Activated CD4-positive, alpha-beta T cell treated with anti-CD3 and anti-CD28 coated beads, Interleukin-2, amount 10 ng/mL, durations not matched to agents 7 days and 5 days (primary cell): ENCODE measurements at regions of chr19 and their contacts with region 1.

Region 1: DNA sequence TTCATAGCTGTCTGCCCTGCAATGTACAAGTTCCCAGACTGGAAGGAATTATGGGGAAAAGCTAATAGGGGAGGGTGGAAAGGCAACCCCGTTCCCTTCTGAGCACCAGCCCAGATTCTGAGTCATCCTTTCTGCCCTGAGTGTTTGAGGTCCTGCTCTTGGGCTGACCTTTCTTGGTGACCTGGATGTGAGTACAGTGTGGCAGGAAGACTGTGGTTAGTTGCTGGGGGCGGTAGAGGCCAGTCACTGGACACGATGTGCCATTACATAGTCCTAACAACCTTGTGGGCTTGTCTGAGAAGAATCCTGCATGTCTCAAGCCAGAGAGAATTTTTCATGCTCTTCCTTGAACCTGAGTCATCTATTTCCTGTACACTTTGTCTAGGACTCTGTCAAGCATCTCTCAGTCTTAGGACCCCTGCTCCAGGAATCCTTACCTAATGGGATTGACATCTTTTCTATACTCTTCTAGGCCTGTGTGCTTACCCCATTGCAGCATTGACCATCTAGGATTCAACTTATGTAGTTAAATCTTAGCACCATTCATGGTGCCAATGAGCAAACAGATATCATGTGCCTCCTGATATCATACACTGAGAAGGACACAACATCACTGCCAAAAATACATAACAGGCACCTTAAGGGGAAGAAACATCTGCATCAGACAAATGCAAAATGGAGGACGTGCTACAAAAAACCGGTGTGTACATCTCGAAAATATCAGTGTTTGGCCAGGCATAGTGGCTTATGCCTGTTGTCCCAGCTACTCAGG is 8.1 kb upstream of the ANGPTL4 start:
- DNase-seq: no peak
- H3K4me3 Mint-ChIP-seq: no peak overlapping the region
- H3K27ac Mint-ChIP-seq: no peak overlapping the region
- H3K4me1 Mint-ChIP-seq: peaks cover 4% of the 10 kb centered on the region
- H3K27me3 Mint-ChIP-seq: peaks cover 12% of the 10 kb centered on the region

Region 2: DNA sequence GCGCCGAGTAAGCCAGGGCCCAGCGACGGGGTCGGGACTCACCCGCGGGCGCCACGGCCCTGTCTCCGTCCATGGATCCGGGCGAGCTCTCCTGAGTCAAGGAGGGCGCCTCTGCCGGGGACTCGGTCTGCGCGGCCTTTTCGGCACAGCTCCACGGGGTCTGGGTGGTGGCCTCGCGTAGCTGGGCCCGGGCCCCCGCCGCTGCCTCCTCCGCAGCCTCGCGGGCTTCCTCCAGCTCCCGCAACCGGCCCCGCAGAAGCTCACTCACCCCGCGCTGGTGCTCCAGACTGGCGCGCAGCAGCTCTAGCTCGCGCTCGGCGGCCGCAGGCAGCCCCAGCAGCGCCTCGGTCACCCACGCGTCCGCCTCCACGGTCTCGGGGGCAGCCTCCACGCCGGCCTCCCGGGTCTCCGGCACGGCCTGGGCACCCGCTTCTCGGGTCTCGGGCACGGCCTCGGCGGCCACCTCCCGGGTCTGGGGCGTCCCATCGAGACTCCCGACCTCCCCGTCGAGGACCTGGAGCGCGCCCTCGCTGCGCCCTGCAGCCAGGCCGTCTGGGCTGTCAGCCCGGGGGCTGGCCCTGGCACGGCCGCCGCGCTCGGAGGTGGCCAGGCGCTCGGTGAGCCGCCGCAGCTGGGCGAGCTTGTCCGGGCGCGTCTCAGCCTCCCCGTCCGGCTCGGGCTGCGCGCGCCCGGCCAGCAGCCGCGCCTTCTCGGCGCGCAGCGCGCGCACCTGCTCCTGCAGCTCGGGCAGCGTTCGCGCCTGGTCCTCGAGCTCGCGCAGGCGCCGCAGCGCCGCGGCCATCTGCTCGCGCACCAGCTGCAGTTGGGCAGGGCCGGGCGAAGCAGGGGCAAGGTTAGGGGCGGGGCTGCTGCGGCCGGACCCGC is 21.1 kb before region 1 on chr19:
- CTCF ChIA-PET with region 1: interaction called, 14 read pairs
- POLR2A ChIA-PET with region 1: no interaction called
- DNase-seq: peak; percentile 23
- H3K4me3 Mint-ChIP-seq: peak overlapping the region; percentile 16
- H3K27ac Mint-ChIP-seq: no peak overlapping the region
- H3K4me1 Mint-ChIP-seq: peaks cover 8% of the 10 kb centered on the region
- H3K27me3 Mint-ChIP-seq: peaks cover 38% of the 10 kb centered on the region

Region 3: DNA sequence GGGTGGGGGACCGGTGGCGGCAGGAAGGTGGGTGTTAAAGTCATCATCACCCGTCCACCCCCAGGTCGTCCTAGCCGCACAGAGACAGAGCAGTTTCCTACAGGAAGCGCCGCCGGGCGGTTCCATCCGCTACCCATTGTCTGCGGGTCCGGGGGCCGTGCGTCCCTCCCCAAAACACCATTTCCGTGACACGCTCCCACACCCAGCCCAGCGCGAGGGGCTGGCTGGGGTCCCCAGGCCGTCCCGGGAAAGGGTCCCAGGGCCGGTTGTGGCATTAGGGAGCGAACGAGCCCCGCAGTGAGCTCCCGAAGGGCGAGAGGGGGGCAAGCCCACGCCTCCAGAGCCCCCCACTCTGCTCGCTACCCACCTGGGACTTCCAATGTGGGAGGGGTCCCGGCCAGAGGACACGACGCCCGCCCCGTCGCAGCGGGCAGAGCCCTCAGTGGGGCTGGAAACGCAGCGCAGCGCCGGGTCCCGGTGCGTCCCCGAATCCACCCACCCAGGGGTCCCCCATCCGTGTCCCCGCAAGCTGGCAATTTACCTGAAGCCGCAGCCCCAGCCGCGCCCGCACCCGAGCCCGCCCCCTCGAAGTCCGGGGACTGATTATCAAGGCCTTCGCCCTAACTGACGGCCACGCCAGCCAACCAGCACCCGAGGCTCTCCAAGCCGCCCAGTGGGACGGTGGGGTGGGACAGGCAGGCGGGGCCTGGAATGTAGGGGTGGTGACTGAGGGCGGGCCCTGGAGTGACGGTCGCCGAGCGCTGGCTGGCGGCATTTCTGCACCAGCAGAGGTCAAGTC is 12.9 kb before region 1 on chr19 and contains the start of gene KANK3:
- CTCF ChIA-PET with region 1: interaction called, 38 read pairs
- POLR2A ChIA-PET with region 1: no interaction called
- DNase-seq: peak; percentile 93
- H3K4me3 Mint-ChIP-seq: peak within 1 kb of the TSS; percentile 75
- H3K27ac Mint-ChIP-seq: peak within 1 kb of the TSS; percentile 84
- H3K4me1 Mint-ChIP-seq: peaks cover 13% of the 10 kb centered on the region
- H3K27me3 Mint-ChIP-seq: peaks cover 31% of the 10 kb centered on the region
- total RNA-seq, gene KANK3: 1.3 to 2.7 TPM

Region 4: DNA sequence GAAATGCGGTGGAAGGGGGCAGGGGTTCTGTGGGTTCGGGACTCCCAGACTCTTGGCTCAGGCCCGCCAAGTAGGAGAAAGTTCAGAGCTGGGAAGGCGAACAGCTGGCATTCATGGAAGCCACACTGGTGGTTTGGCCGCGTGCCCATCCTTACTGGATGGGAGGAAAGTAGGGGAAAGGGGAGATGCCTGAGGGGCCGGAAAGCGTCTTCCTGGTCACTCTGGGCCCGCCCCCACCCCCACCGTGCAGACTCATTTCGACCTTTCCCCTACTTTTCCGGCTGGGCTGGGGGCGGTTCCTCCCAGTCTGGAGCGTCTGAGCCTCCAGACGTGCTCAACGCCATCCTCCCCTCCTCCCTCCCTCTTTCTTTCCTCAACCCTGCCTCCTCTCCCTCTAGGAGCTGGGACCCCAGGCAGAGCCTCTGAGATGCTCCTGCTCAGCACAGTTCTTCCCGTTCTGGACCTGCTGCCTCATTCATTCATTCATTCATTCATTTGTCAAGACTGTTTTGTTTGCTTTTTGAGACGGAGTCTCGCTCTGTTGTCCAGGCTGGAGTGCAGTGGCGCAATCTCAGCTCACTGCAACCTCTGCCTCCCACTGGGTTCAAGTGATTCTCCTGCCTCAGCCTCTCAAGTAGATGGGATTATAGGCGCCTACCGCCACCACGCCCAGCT is 11.6 kb after region 1 on chr19:
- CTCF ChIA-PET with region 1: interaction called, 12 read pairs
- POLR2A ChIA-PET with region 1: no interaction called
- DNase-seq: no peak
- H3K4me3 Mint-ChIP-seq: no peak overlapping the region
- H3K27ac Mint-ChIP-seq: no peak overlapping the region
- H3K4me1 Mint-ChIP-seq: peaks cover 19% of the 10 kb centered on the region
- H3K27me3 Mint-ChIP-seq: peaks cover 44% of the 10 kb centered on the region

Region 5: GRCh38 chr19:8389891-8390616 is 34.2 kb after region 1 on chr19 and contains the start of gene RAB11B:
- CTCF ChIA-PET with region 1: interaction called, 12 read pairs
- POLR2A ChIA-PET with region 1: interaction called, 3 read pairs
- DNase-seq: peak; percentile 99
- H3K4me3 Mint-ChIP-seq: peak within 1 kb of the TSS; percentile 93
- H3K27ac Mint-ChIP-seq: peak within 1 kb of the TSS; percentile 99
- H3K4me1 Mint-ChIP-seq: peaks cover 33% of the 10 kb centered on the region
- H3K27me3 Mint-ChIP-seq: no peaks in the 10 kb centered on the region
- total RNA-seq, gene RAB11B: 104 to 107 TPM

Region 6: DNA sequence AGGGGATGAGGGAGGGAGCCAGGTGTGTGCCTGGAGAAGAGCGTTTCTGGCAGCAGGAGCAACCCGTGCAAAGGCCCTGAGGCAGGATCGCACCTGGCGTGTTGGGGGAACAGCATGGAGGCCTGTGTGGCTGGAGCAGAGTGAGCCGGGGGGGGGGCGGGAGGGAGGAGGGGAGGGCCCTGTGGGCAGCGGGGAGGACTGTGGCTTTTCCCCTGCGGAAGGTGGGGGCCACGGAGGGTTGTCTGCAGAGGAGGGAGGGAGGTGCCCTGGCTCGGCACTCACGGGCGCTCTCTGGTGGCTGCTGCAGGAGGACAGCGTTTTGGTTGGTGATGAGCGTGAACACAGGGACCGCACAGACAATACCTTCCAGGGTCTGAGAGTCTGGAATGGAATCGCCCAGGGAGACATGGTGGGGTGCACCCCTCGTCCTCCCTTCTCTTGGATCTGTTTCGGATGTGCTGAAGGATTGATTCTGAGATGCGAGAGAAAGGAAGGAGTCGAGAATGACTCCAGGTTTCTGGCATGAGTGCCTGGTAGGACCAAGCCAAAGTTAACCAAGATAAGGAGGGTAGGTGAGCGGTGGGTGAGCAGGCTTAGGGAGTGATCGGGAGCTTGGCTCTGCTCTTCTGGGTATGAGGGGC is 40.9 kb after region 1 on chr19:
- CTCF ChIA-PET with region 1: interaction called, 12 read pairs
- POLR2A ChIA-PET with region 1: no interaction called
- DNase-seq: peak; percentile 86
- H3K4me3 Mint-ChIP-seq: no peak overlapping the region
- H3K27ac Mint-ChIP-seq: peak overlapping the region; percentile 6
- H3K4me1 Mint-ChIP-seq: peaks cover 34% of the 10 kb centered on the region
- H3K27me3 Mint-ChIP-seq: no peaks in the 10 kb centered on the region